Stomach (tissue), 19 donors: ENCODE measurements at regions of chr19 and their contacts with region 1.

Region 1: DNA sequence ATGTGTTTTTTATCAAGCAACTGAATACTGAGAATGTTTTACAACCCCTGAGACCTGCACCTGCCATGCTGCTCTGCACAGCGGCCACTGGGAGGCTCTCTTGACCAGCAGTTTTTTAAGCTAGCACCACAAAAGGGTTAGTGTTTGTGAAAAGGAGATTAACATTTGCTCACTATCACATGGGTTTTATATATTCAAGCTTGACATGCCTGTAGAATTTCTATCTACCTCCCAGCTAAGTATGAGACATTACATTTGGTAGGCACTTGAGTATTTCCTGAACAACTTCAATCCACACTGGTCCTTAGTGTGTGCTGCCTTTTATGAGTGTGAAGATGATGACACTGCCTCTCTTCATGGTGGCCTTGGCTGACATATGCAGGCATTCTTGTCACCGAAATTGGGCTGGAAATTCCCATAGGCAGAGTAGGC is 1238.9 kb downstream of the UQCRFS1 start:
- DNase-seq: peak; percentile 43 to 82
- H3K4me3 ChIP-seq: no peak overlapping the region
- H3K27ac ChIP-seq: no peak overlapping the region
- H3K4me1 ChIP-seq: peaks cover 0 to 12% (median 7%) of the 10 kb centered on the region in 4 donors
- H3K27me3 ChIP-seq: no peaks in the 10 kb centered on the region
- CTCF ChIP-seq: peak in 5 of 7 experiments; percentile 31 to 59 (median 53)
- EP300 ChIP-seq: no peak
- POLR2A ChIP-seq: no peak

Region 2: DNA sequence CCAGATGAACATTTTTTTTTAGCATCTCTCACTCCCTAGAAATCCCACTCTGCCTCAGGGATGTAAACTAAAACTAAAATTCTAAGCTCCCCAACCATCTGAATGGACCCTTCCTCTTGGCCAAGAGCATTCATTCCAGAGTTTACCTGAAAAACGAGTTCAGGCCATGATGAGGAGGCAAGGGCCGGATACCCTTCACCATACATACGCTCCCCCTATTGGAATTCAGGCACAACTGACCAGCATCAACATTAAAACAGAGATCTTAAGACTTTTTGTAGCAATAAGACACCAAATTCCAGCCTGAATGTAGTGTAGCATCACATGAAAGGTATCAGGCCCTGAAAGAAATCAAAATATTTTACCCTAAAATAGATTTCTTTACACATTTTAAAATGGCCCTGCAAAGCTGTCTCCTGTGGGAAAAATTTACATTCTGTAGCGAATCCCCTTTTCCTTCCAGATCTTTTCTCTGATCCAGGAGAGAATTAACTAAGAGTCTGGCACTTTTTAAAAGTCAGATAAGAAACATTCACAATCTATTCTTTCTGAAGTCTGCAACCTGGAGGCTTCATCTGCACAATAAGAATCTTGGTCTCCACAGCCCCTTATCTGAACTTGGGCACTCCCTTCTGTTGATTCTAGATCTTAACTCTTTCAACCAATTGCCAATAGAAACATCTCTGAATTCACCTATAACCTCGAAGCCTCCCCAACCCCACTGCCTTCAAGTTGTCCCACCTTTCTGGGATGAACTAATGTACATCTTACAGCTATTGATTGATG is 350.4 kb after region 1 on chr19:
- intact Hi-C with region 1: loop called (anchors 5 kb)
- DNase-seq: no peak
- H3K4me3 ChIP-seq: no peak overlapping the region
- H3K27ac ChIP-seq: no peak overlapping the region
- H3K4me1 ChIP-seq: no peaks in the 10 kb centered on the region
- H3K27me3 ChIP-seq: no peaks in the 10 kb centered on the region
- CTCF ChIP-seq: no peak
- EP300 ChIP-seq: no peak
- POLR2A ChIP-seq: no peak